Sigmoid colon (tissue), 7 donors: ENCODE measurements at regions of chr20 and their contacts with region 1.

Region 1: GRCh38 chr20:19583532-19584175 is 174.4 kb upstream of the RIN2 start:
- DNase-seq: peak; percentile 80
- H3K4me3 ChIP-seq: no peak overlapping the region
- H3K27ac ChIP-seq: no peak overlapping the region
- H3K4me1 ChIP-seq: peaks cover 0 to 7% (median 6%) of the 10 kb centered on the region in 4 donors
- H3K27me3 ChIP-seq: no peaks in the 10 kb centered on the region
- CTCF ChIP-seq: peak; percentile 61 to 86 (median 83)
- EP300 ChIP-seq: no peak
- POLR2A ChIP-seq: no peak

Region 2: GRCh38 chr20:19205977-19206396 is 377.7 kb before region 1 on chr20:
- intact Hi-C with region 1: loop called (anchors 1 kb)
- DNase-seq: peak; percentile 83
- H3K4me3 ChIP-seq: no peak overlapping the region
- H3K27ac ChIP-seq: no peak overlapping the region
- H3K4me1 ChIP-seq: peaks cover 0 to 13% (median 7%) of the 10 kb centered on the region in 4 donors
- H3K27me3 ChIP-seq: no peaks in the 10 kb centered on the region
- CTCF ChIP-seq: peak; percentile 53 to 88 (median 82)
- EP300 ChIP-seq: no peak
- POLR2A ChIP-seq: no peak

Region 3: DNA sequence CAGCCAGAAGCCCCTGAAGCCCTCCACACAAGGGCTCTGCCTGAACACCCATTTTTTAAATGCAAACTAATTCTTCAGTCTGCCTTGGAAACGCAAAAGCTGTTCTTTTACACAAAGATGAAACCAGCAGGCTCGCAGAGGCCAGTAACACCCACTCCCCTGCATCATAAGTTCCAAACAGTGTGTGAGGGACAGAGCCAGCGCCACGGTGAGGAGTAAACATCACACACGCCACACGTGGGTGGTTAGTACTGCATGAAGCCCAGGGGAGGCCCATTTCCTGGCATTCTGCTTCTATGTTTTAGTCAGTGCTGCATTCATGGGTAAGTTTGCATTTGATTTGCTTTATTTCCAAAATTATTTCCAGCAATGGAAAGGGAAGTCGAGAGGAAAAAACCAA is 43.3 kb before region 1 on chr20:
- intact Hi-C with region 1: no loop called
- DNase-seq: no peak
- H3K4me3 ChIP-seq: no peak overlapping the region
- H3K27ac ChIP-seq: no peak overlapping the region
- H3K4me1 ChIP-seq: peaks cover 0 to 5% (median 0%) of the 10 kb centered on the region in 4 donors
- H3K27me3 ChIP-seq: no peaks in the 10 kb centered on the region
- CTCF ChIP-seq: no peak
- EP300 ChIP-seq: no peak
- POLR2A ChIP-seq: no peak

Region 4: DNA sequence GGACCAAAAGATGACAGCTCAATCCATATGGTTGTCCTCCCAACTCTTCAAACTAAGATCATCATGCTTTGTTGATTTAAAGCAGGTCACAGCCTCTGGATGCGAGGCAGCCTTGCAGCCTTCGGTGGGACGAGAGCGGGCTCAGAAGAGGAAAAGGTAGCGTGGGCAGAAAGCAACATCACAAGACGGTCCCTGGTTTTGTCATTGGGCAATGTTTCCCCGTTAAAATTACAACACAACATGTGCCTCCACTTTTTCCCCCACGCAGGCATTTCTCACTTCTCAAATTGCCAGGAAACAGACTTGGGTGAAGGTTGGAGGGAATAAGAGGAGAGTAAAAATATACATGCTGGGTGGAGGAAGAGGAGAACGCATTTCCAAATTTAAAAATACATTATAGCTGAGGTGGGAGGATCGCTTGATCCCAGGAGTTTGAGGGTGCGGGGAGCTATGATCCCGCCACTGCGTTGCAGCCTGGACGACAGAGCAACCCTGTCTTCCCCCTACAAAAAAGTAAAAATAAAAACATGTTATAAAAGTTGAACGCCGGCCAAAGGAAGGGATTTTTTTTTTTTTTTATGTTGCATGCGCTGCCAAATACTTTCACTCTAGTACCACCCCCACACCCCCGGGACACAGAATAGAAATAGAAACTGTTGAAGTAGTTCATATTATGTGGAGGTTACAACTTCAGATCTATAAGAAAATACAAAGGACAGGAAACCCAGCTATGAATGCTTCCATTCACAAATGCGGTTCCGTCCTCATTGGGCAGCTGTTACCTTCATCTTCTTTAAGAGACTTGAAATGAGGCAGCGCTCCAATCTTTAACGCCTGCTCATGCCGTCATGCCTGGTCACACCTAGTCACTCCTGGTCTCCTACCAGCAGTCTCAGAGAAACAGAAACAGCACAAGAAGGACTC is 419.6 kb after region 1 on chr20:
- intact Hi-C with region 1: no loop called
- DNase-seq: peak; percentile 82
- H3K4me3 ChIP-seq: peak overlapping the region; percentile 3 to 31 (median 22)
- H3K27ac ChIP-seq: peak overlapping the region; percentile 59 to 77 (median 68)
- H3K4me1 ChIP-seq: peaks cover 0 to 36% (median 29%) of the 10 kb centered on the region in 4 donors
- H3K27me3 ChIP-seq: no peaks in the 10 kb centered on the region
- CTCF ChIP-seq: no peak
- EP300 ChIP-seq: peak in 2 of 4 donors; percentile 57 to 77
- POLR2A ChIP-seq: no peak

Region 5: DNA sequence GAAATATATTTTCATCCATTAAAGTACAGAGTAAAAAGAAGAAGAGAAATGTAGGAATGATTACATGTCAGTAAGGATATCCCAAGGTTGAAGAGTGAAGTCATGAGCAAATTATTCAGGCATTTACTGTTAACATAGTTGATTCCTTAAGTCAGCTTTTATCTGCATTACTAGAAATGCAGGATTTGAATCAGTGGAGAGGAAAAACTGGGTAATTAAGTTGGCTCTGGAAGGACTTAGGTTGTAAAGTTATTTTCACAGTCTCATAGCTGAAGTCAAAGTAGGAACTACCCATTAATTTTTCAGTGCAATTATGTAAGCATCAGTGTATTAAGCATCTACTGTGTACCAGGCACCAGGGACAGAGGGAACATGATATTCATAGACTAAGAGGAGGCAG is 441.3 kb after region 1 on chr20:
- intact Hi-C with region 1: no loop called
- DNase-seq: no peak
- H3K4me3 ChIP-seq: no peak overlapping the region
- H3K27ac ChIP-seq: no peak overlapping the region
- H3K4me1 ChIP-seq: peaks cover 0 to 16% (median 11%) of the 10 kb centered on the region in 4 donors
- H3K27me3 ChIP-seq: no peaks in the 10 kb centered on the region
- CTCF ChIP-seq: no peak
- EP300 ChIP-seq: no peak
- POLR2A ChIP-seq: no peak